BJ (cell line): ENCODE measurements at regions of chr1 and their contacts with region 1.

Region 1: DNA sequence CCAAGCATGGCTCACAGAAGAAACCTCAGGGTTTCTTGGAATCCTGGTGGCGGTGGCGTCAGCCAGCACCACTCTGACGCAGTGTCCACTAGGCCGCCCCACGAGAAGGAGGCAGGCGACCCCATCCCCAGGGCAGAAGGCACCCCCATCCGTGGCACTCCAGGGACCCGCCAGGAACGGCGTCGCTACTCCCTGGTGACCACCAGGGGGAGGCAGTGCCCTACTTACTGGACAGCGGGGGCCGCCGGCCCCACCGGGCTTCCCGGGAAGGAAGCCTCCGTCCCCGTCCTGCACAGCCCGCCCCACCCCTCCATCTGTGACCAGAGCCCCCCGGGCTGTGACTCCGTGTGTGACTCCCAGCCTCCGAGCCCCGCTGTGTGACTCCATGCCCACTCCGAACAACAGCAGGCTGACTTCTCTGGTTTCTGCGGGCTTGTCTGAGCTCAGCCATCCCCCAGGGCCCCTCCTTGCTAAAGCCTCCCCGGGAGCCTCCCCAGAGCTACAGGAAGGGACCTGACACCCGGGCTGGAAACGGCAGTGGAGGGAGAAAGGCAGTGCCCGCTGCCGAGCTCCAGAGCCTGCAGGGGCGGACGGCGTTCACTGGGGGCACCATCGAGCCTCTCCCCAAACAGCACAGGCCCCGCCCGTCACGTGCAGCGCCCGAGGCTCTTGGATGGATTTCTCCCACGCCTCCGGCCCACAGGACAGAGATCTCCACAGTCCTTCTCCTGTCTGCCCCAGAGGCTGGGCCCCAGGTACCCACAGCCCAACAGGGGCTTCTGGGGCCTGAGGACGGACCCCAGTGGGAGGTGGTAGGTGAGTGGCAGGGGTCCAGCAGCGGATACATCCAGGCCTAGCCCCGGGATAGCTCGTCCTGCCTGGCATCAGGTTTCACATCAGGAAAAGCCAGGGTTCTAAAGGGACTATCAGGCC is 21.1 kb downstream of the KIF17 start:
- DNase-seq: peak; percentile 76
- H3K4me3 ChIP-seq: peak overlapping the region; percentile 48
- H3K27me3 ChIP-seq: no peaks in the 10 kb centered on the region
- CTCF ChIP-seq: peak; percentile 89

Region 2: DNA sequence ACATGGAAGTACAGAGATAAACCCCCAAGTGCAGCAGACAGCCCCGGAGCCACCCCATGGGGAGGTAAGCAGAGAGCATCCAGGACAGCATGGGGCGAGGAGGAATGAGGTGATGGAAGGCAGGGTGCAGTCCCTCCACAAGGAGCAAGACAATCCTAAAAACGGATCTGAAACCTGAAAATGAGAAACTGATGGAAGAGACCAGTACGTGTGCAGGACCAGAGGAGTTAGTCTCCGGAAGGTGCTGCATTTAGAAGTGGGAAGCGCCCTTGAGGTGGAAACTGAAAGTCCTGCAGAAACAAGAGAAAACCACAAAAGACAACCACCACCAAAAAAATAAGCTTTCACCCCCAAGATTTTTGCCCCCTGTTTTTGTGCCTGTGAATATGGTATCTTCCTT is 18.1 kb before region 1 on chr1:
- CTCF ChIA-PET with region 1: interaction called, 10 read pairs
- POLR2A ChIA-PET with region 1: no interaction called
- DNase-seq: no peak
- H3K4me3 ChIP-seq: no peak overlapping the region
- H3K27me3 ChIP-seq: no peaks in the 10 kb centered on the region
- CTCF ChIP-seq: no peak

Region 3: GRCh38 chr1:20731057-20731991 is 34.7 kb after region 1 on chr1:
- CTCF ChIA-PET with region 1: interaction called, 11 read pairs
- POLR2A ChIA-PET with region 1: no interaction called
- DNase-seq: no peak
- H3K4me3 ChIP-seq: peak overlapping the region; percentile 58
- H3K27me3 ChIP-seq: no peaks in the 10 kb centered on the region
- CTCF ChIP-seq: no peak

Region 4: GRCh38 chr1:20932437-20932977 is 235.8 kb after region 1 on chr1:
- CTCF ChIA-PET with region 1: no interaction called
- POLR2A ChIA-PET with region 1: no interaction called
- DNase-seq: no peak
- H3K4me3 ChIP-seq: no peak overlapping the region
- H3K27me3 ChIP-seq: no peaks in the 10 kb centered on the region
- CTCF ChIP-seq: no peak

Region 5: GRCh38 chr1:21189906-21190500 is 493.3 kb after region 1 on chr1:
- CTCF ChIA-PET with region 1: interaction called, 147 read pairs
- POLR2A ChIA-PET with region 1: no interaction called
- DNase-seq: no peak
- H3K4me3 ChIP-seq: no peak overlapping the region
- H3K27me3 ChIP-seq: no peaks in the 10 kb centered on the region
- CTCF ChIP-seq: no peak